ENCODE measurements at regions of chr12 and their contacts with region 1.

Region 1: GRCh38 chr12:79690638-79691493 is at the start of gene PAWR:
- DNase-seq: peak; percentile 71
- ATAC-seq: peak; percentile 87
- H3K4me3 ChIP-seq: peak within 1 kb of the TSS; percentile 76 to 97 (median 96)
- H3K27ac ChIP-seq: peak within 1 kb of the TSS; percentile 99
- H3K4me1 ChIP-seq: peaks cover 17% of the 10 kb centered on the region
- H3K27me3 ChIP-seq: no peaks in the 10 kb centered on the region; a peak in 1 of 5 replicates
- CTCF ChIP-seq: peak; percentile 82
- EP300 ChIP-seq: no peak
- POLR2A ChIP-seq: peak; percentile 73 to 88
- RAD21 ChIP-seq: no peak; the same call in none of the 2 replicates
- total RNA-seq, gene PAWR: 36.1 and 37.4 TPM in 2 replicates

Region 2: GRCh38 chr12:79531122-79531913 is 159.5 kb before region 1 on chr12:
- CTCF ChIA-PET with region 1: no interaction called
- POLR2A ChIA-PET with region 1: interaction called, 7 read pairs
- in situ Hi-C with region 1: no loop called
- intact Hi-C with region 1: loop called (anchors 1 kb)
- DNase-seq: peak; percentile 46
- ATAC-seq: no peak
- H3K4me3 ChIP-seq: no peak overlapping the region
- H3K27ac ChIP-seq: peak overlapping the region; percentile 71
- H3K4me1 ChIP-seq: peaks cover 75% of the 10 kb centered on the region
- H3K27me3 ChIP-seq: no peaks in the 10 kb centered on the region
- CTCF ChIP-seq: no peak
- EP300 ChIP-seq: 0 out of 4 replicates have a peak, but pooled peaks of 1 of the 2 experiments have one; percentile 14
- POLR2A ChIP-seq: no peak
- RAD21 ChIP-seq: no peak

Region 3: GRCh38 chr12:79555028-79555930 is 135.6 kb before region 1 on chr12:
- CTCF ChIA-PET with region 1: no interaction called
- POLR2A ChIA-PET with region 1: interaction called, 25 read pairs
- in situ Hi-C with region 1: loop called (anchors 25 kb)
- intact Hi-C with region 1: loop called (anchors 1 kb)
- DNase-seq: peak; percentile 62
- ATAC-seq: no peak
- H3K4me3 ChIP-seq: no peak overlapping the region
- H3K27ac ChIP-seq: peak overlapping the region; percentile 49
- H3K4me1 ChIP-seq: peaks cover 82% of the 10 kb centered on the region
- H3K27me3 ChIP-seq: no peaks in the 10 kb centered on the region
- CTCF ChIP-seq: peak; percentile 67
- EP300 ChIP-seq: no peak
- POLR2A ChIP-seq: no peak
- RAD21 ChIP-seq: peak; percentile 68

Region 4: GRCh38 chr12:79644274-79645234 is 46.3 kb before region 1 on chr12:
- CTCF ChIA-PET with region 1: no interaction called
- POLR2A ChIA-PET with region 1: interaction called, 5 read pairs
- in situ Hi-C with region 1: no loop called
- intact Hi-C with region 1: loop called (anchors 5 kb)
- DNase-seq: peak; percentile 15
- ATAC-seq: peak; percentile 26; the same call in 1 of the 3 replicates
- H3K4me3 ChIP-seq: peak overlapping the region in 2 of 3 experiments; percentile 10 to 29; a peak in 2 of 6 replicates
- H3K27ac ChIP-seq: peak overlapping the region; percentile 56
- H3K4me1 ChIP-seq: peaks cover 75% of the 10 kb centered on the region
- H3K27me3 ChIP-seq: no peaks in the 10 kb centered on the region
- CTCF ChIP-seq: no peak
- EP300 ChIP-seq: no peak
- POLR2A ChIP-seq: no peak
- RAD21 ChIP-seq: no peak

Region 5: GRCh38 chr12:79935021-79935623 is 244.3 kb after region 1 on chr12 and contains the start of gene PPP1R12A:
- CTCF ChIA-PET with region 1: no interaction called
- POLR2A ChIA-PET with region 1: no interaction called
- in situ Hi-C with region 1: no loop called
- intact Hi-C with region 1: loop called (anchors 10 kb)
- DNase-seq: peak; percentile 93
- ATAC-seq: peak; percentile 96
- H3K4me3 ChIP-seq: peak within 1 kb of the TSS; percentile 74 to 100 (median 98)
- H3K27ac ChIP-seq: peak within 1 kb of the TSS; percentile 95
- H3K4me1 ChIP-seq: peaks cover 28% of the 10 kb centered on the region
- H3K27me3 ChIP-seq: no peaks in the 10 kb centered on the region; a peak in 1 of 5 replicates
- CTCF ChIP-seq: peak; percentile 34; the same call in 1 of the 2 replicates
- EP300 ChIP-seq: no peak
- POLR2A ChIP-seq: peak; percentile 87 to 90
- RAD21 ChIP-seq: 0 out of 2 replicates have a peak, but pooled peaks have one; percentile 53
- total RNA-seq, gene PPP1R12A: 38.1 and 50.0 TPM in 2 replicates